HepG2 (cell line): ENCODE measurements at regions of chr3 and their contacts with region 1.

Region 1: DNA sequence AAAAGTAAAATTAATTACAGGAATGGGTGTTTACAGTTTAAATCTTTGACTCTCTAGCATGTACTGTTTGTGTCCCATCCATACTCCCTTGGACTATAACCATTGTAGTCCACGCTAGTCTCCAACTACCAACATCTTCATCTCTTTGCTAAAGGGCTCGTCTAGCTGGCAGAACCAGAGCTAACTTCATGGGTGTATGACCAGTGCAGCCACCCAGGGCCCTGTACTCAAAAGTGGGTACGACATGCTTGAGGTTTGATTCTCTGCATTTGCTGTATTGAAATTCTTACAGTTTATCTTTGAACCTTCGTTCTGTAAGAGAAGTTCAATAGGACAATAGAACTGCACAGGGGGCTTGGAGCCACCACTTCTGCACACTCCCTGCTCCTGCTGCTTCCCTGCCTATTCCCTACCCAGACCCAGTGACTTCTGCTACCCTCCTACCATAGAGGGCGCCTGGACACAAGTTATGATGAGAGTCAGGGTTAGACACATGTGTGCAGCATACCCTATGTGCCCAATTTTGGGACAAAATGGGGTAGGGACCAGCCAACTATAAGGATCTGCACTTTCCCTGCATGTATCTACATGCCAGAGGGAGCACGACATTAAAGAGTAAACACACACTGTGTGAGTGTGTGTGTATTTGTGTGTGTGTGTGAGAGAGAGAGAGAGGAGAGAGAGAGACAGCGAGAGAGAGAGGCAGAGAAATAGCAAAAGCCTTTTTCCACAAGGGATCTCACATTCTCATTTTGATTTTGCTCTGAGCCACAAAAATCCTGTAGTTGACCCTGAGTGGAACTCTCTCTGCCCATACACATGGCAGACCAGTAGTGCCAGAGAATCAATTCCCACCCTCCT is 59.0 kb upstream of the NECTIN3 start:
- DNase-seq: peak; percentile 53
- ATAC-seq: peak; percentile 100
- H3K4me3 ChIP-seq: no peak overlapping the region
- H3K27ac ChIP-seq: no peak overlapping the region
- H3K4me1 ChIP-seq: 0 out of 2 replicates have a peak, but pooled peaks cover 5% of the 10 kb centered on the region
- H3K27me3 ChIP-seq: no peaks in the 10 kb centered on the region; a peak in 1 of 5 replicates
- CTCF ChIP-seq: peak; percentile 83
- EP300 ChIP-seq: no peak
- POLR2A ChIP-seq: no peak
- RAD21 ChIP-seq: 0 out of 2 replicates have a peak, but pooled peaks have one; percentile 27

Region 2: DNA sequence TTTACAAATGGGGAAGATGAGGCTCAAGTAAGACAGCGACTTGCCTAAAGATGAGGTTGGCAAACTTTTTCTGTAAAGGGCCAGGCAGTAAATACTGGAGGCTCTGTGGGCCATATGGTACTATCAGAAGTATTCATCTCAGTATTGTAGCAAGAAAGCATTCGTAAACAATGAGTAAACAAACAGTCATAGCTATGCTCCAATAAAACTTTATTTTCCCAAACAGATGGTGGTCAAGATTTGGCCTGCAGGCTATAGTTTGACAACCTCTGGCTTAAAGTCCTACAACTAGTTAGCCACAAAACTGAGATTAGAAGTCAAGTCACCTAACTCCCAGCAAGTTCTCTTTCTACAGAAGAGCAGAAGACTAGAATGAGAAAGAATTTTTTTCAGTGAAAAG is 118.0 kb before region 1 on chr3:
- CTCF ChIA-PET with region 1: no interaction called
- POLR2A ChIA-PET with region 1: no interaction called
- in situ Hi-C with region 1: no loop called
- intact Hi-C with region 1: loop called (anchors 10 kb)
- DNase-seq: no peak
- ATAC-seq: no peak
- H3K4me3 ChIP-seq: no peak overlapping the region
- H3K27ac ChIP-seq: no peak overlapping the region
- H3K4me1 ChIP-seq: peaks cover 12% of the 10 kb centered on the region
- H3K27me3 ChIP-seq: no peaks in the 10 kb centered on the region
- CTCF ChIP-seq: no peak
- EP300 ChIP-seq: no peak
- POLR2A ChIP-seq: no peak
- RAD21 ChIP-seq: no peak

Region 3: DNA sequence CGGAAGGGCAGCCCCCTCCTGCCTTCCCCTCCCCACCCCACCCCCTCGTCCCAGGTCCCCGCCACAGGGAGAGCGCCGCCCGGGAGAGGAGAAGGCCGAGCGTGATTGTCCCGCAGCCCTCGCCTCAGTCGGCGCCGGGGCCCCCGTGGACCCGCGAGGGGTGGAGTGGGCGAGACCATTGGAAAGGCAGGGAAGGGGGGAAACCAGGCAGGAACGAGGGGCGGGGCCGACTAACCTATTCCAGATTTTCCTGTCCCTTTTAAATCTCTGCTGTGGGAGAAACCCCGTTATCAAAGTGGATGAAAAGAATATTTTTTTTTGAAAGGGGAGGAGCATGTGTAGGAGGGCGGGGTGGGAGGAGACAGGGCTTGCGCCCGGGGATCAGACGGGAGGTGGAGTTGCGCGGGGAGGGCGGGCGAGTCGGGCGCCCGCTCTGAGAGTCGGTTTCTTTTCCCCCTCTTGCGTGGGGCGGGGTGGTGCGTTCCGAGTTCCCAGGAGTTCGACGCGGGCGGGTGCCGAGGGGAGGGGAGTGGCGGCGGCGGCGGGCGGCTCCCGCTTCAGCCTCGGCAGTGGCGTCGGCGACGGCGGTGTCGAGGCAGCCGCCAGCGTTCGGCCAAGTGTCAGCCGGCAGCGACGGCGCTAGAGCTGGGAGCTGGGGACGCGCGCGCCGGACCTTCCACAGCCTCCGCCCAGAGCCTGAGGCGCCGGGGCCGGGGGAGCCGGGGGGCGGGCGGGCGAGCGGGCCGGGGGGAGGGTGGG is 58.8 kb after region 1 on chr3 and contains the start of gene NECTIN3:
- CTCF ChIA-PET with region 1: no interaction called
- POLR2A ChIA-PET with region 1: no interaction called
- in situ Hi-C with region 1: no loop called
- intact Hi-C with region 1: loop called (anchors 5 kb)
- DNase-seq: peak; percentile 90
- ATAC-seq: peak; percentile 77
- H3K4me3 ChIP-seq: peak within 1 kb of the TSS; percentile 96 to 97 (median 96)
- H3K27ac ChIP-seq: peak within 1 kb of the TSS; percentile 89
- H3K4me1 ChIP-seq: peaks cover 58% of the 10 kb centered on the region
- H3K27me3 ChIP-seq: no peaks in the 10 kb centered on the region; a peak in 1 of 5 replicates
- CTCF ChIP-seq: no peak; the same call in 1 of the 2 replicates
- EP300 ChIP-seq: no peak
- POLR2A ChIP-seq: peak; percentile 8 to 50; a peak in 2 of 4 replicates
- RAD21 ChIP-seq: no peak
- total RNA-seq, gene NECTIN3: 28.7 and 45.1 TPM in 2 replicates

Region 4: GRCh38 chr3:111080413-111080812 is 67.8 kb after region 1 on chr3:
- CTCF ChIA-PET with region 1: no interaction called
- POLR2A ChIA-PET with region 1: no interaction called
- in situ Hi-C with region 1: no loop called
- intact Hi-C with region 1: loop called (anchors 2 kb)
- DNase-seq: peak; percentile 39
- ATAC-seq: peak; percentile 63
- H3K4me3 ChIP-seq: no peak overlapping the region
- H3K27ac ChIP-seq: no peak overlapping the region
- H3K4me1 ChIP-seq: peaks cover 34% of the 10 kb centered on the region
- H3K27me3 ChIP-seq: no peaks in the 10 kb centered on the region
- CTCF ChIP-seq: peak; percentile 47
- EP300 ChIP-seq: no peak
- POLR2A ChIP-seq: no peak
- RAD21 ChIP-seq: no peak

Region 5: DNA sequence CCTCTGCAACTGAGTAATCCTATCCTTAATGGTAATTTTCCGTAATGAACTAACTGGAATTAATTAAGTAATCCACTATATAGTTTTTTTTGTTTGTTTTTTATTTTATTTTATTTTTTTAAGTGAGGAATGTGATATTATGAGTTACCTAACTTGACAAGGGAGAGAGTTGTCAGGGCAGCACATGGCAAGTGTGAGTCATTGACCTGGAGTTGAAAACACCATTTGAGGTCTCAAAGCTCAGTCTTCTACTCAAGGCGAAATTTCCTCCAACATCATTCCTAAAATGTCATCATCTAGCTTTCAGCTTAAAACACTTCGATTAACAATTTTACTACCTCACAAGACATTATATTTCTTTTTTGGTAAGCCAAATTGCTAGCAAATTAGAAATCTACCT is 146.8 kb after region 1 on chr3:
- CTCF ChIA-PET with region 1: no interaction called
- POLR2A ChIA-PET with region 1: no interaction called
- in situ Hi-C with region 1: no loop called
- intact Hi-C with region 1: no loop called
- DNase-seq: no peak
- ATAC-seq: no peak
- H3K4me3 ChIP-seq: no peak overlapping the region
- H3K27ac ChIP-seq: no peak overlapping the region
- H3K4me1 ChIP-seq: peaks cover 8% of the 10 kb centered on the region
- H3K27me3 ChIP-seq: no peaks in the 10 kb centered on the region
- CTCF ChIP-seq: no peak
- EP300 ChIP-seq: no peak
- POLR2A ChIP-seq: no peak
- RAD21 ChIP-seq: no peak

Region 6: GRCh38 chr3:111362381-111363009 is 349.9 kb after region 1 on chr3:
- CTCF ChIA-PET with region 1: no interaction called
- POLR2A ChIA-PET with region 1: no interaction called
- in situ Hi-C with region 1: no loop called
- intact Hi-C with region 1: no loop called
- DNase-seq: no peak
- ATAC-seq: no peak
- H3K4me3 ChIP-seq: no peak overlapping the region
- H3K27ac ChIP-seq: no peak overlapping the region
- H3K4me1 ChIP-seq: no peaks in the 10 kb centered on the region
- H3K27me3 ChIP-seq: no peaks in the 10 kb centered on the region
- CTCF ChIP-seq: no peak
- EP300 ChIP-seq: no peak
- POLR2A ChIP-seq: no peak
- RAD21 ChIP-seq: no peak